H1 (cell line): ENCODE measurements at regions of chr9 and their contacts with region 1.

Region 1: DNA sequence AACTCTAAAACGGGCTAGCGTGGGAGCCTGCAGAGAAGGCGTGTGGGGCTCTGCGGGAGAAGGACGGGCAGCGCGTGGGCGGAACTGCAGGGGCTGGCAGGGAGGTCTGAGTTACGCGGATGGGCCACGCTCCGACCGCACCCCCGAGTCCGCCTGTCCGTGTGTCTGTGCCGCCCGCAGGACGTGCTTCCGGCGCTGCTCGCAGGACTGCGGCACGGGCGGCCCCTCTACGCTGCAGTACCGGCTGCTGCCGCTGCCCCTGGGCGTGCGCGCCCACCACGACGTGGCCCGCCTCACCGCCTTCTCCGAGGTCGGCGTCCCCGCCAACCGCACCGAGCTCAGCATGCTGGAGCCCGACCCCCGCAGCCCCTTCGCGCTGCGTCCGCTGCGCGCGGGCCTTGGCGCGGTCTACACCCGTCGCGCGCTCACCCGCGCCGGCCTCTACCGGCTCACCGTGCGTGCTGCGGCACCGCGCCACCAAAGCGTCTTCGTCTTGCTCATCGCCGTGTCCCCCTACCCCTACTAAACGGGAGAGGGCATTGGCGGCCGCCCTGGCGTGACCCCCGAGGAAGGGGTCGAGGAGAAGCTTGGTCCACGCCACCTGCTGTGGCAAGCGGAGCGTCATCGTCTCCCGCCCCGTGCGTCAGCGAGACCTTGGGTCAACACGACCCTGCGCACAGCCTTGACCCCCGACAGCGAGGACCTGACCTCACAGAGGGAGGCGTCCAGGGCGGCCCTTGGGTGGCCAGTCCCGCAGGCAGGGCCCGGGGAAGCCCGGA is 11.4 kb upstream of the ASS1 start:
- DNase-seq: peak in 1 of 2 experiments; percentile 85
- H3K4me3 ChIP-seq: peak overlapping the region; percentile 6 to 62 (median 38)
- H3K27ac ChIP-seq: no peak overlapping the region
- H3K4me1 ChIP-seq: peaks cover 0 to 20% (median 11%) of the 10 kb centered on the region in 4 experiments; a peak in 6 of 7 replicates
- H3K27me3 ChIP-seq: peaks cover 1 to 27% (median 20%) of the 10 kb centered on the region in 4 experiments; a peak in 6 of 7 replicates
- CTCF ChIP-seq: peak in 2 of 3 experiments; percentile 48 to 66; a peak in 3 of 4 replicates
- EP300 ChIP-seq: no peak
- POLR2A ChIP-seq: no peak
- RAD21 ChIP-seq: peak; percentile 32 to 40; a peak in 3 of 4 replicates

Region 2: GRCh38 chr9:130421802-130422276 is 11.5 kb before region 1 on chr9:
- CTCF ChIA-PET with region 1: interaction called, 12 read pairs
- POLR2A ChIA-PET with region 1: interaction called, 5 read pairs
- DNase-seq: peak in 1 of 2 experiments; percentile 65
- H3K4me3 ChIP-seq: no peak overlapping the region
- H3K27ac ChIP-seq: no peak overlapping the region
- H3K4me1 ChIP-seq: peaks cover 6 to 15% (median 9%) of the 10 kb centered on the region in 4 experiments; a peak in 6 of 7 replicates
- H3K27me3 ChIP-seq: no peaks in the 10 kb centered on the region
- CTCF ChIP-seq: no peak
- EP300 ChIP-seq: 0 out of 3 replicates have a peak, but pooled peaks of 1 of the 2 experiments have one; percentile 14
- POLR2A ChIP-seq: no peak
- RAD21 ChIP-seq: no peak

Region 3: GRCh38 chr9:130606887-130607600 is 173.7 kb after region 1 on chr9:
- CTCF ChIA-PET with region 1: no interaction called
- POLR2A ChIA-PET with region 1: no interaction called
- DNase-seq: no peak
- H3K4me3 ChIP-seq: no peak overlapping the region
- H3K27ac ChIP-seq: no peak overlapping the region
- H3K4me1 ChIP-seq: no peaks in the 10 kb centered on the region; a peak in 1 of 7 replicates
- H3K27me3 ChIP-seq: no peaks in the 10 kb centered on the region
- CTCF ChIP-seq: no peak
- EP300 ChIP-seq: no peak
- POLR2A ChIP-seq: no peak
- RAD21 ChIP-seq: no peak